Activated CD8-positive, alpha-beta T cell treated with anti-CD3 and anti-CD28 coated beads for 36 hours (primary cell): ENCODE measurements at regions of chr12 and their contacts with region 1.

Region 1: GRCh38 chr12:112198120-112198733 is 72.9 kb downstream of the TRAFD1 start:
- DNase-seq: peak; percentile 79
- ATAC-seq: peak; percentile 99
- H3K4me3 Mint-ChIP-seq: no peak overlapping the region
- H3K27ac Mint-ChIP-seq: no peak overlapping the region
- H3K4me1 Mint-ChIP-seq: no peaks in the 10 kb centered on the region
- H3K27me3 Mint-ChIP-seq: no peaks in the 10 kb centered on the region
- CTCF ChIP-seq: peak; percentile 69

Region 2: GRCh38 chr12:112218150-112218549 is 19.9 kb after region 1 on chr12:
- CTCF ChIA-PET with region 1: interaction called, 10 read pairs
- POLR2A ChIA-PET with region 1: interaction called, 3 read pairs
- intact Hi-C with region 1: no loop called
- DNase-seq: no peak
- ATAC-seq: no peak
- H3K4me3 Mint-ChIP-seq: no peak overlapping the region
- H3K27ac Mint-ChIP-seq: no peak overlapping the region
- H3K4me1 Mint-ChIP-seq: no peaks in the 10 kb centered on the region
- H3K27me3 Mint-ChIP-seq: no peaks in the 10 kb centered on the region
- CTCF ChIP-seq: no peak

Region 3: GRCh38 chr12:112382232-112382796 is 184.1 kb after region 1 on chr12 and contains the start of gene HECTD4:
- CTCF ChIA-PET with region 1: interaction called, 74 read pairs
- POLR2A ChIA-PET with region 1: no interaction called
- intact Hi-C with region 1: loop called (anchors 2 kb)
- DNase-seq: peak; percentile 98
- ATAC-seq: peak; percentile 97
- H3K4me3 Mint-ChIP-seq: peak within 1 kb of the TSS; percentile 84
- H3K27ac Mint-ChIP-seq: peak within 1 kb of the TSS; percentile 87
- H3K4me1 Mint-ChIP-seq: peaks cover 26% of the 10 kb centered on the region
- H3K27me3 Mint-ChIP-seq: no peaks in the 10 kb centered on the region
- CTCF ChIP-seq: no peak
- total RNA-seq, gene HECTD4: 18.2 to 22.6 TPM

Region 4: GRCh38 chr12:112409906-112410244 is 211.6 kb after region 1 on chr12:
- CTCF ChIA-PET with region 1: interaction called, 13 read pairs
- POLR2A ChIA-PET with region 1: no interaction called
- intact Hi-C with region 1: no loop called
- DNase-seq: no peak
- ATAC-seq: no peak
- H3K4me3 Mint-ChIP-seq: peak overlapping the region; percentile 99
- H3K27ac Mint-ChIP-seq: peak overlapping the region; percentile 100
- H3K4me1 Mint-ChIP-seq: peaks cover 35% of the 10 kb centered on the region
- H3K27me3 Mint-ChIP-seq: no peaks in the 10 kb centered on the region
- CTCF ChIP-seq: no peak